Head of caudate nucleus (tissue), 42 donors: ENCODE measurements at regions of chr5 and their contacts with region 1.

Region 1: DNA sequence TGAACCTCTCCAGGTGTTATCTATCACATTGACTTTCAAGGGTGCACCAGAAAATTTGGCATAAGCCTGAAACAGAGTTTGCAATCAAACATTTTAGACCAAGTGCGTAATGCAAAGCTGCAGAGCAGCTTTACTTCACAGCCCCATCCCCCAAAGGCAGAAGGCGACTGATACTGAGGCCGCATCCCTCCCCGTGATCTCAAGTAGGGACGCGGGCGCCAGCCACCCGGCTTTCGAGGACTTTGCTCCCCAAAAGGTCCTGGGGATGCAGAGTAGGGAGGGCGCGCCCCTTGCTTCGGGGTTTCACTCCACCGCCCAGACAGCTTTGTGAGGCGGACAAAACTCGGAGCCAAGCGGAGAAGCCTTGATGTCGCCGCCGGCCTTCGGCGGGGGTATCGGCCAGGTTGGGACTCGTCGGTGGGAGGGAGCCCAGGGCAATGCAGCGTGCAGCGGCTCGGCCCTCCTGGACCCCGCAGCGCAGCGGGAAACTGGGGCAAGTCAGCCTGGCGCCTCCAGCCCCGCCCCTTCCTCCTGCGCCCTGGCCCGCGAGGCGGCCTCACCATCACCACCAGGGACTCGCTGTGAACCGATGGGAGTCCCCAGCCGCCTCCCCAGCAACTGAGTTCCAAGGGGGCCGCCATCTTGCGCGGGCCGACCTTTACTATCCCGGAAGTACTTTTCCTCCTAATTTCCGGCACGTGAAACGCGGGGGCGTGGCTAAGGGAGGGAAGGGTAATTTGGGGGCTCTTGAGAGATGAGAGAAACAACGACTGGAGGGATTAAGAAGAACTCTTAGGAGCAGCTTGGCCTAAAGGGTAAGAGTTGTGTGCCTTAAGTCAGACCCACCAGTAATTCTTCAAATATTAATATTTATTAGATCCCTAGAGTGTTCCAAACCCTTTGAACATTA is at the start of gene MTX3:
- DNase-seq: peak; percentile 82 to 96 (median 90)

Region 2: DNA sequence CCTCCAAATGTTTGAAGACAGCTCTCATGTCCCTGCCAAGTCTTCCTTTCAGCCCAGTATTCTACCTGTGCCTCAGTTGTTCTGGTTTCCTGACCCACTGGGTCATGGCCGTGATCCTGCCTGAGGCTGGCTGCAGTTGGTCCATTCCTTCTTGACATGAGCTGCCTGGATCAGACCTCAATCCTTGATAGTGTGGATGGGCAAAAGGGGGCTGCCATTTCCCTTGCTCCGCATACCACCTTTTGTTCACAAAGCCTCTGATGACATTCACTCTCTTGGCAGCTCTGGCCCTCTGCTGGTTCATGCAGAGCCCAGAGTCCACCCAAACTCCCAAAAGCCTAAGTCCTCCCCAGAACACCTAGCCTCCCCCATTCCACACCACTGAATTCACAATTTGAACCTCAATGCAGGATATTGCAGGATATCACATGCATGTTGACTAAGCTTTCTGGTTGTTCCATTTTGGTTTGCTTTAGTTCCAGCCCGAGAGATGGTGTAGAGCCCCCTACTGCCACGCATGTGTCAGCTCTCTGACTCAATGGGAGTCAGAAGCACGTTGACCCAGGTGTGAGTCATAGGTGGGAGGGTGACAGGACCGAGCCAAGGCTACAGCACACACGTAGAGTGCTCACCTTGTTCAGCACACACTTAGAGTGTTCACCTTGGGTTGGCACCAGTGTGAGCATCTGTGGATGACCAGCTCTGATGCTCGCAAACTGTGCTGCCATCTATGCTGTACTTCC is 137.0 kb before region 1 on chr5:
- intact Hi-C with region 1: no loop called
- DNase-seq: no peak

Region 3: GRCh38 chr5:79901631-79902030 is 89.2 kb before region 1 on chr5:
- intact Hi-C with region 1: no loop called
- DNase-seq: no peak

Region 4: GRCh38 chr5:80069918-80070318 is 79.1 kb after region 1 on chr5:
- intact Hi-C with region 1: loop called (anchors 10 kb)
- DNase-seq: peak in 10 of 42 donors; percentile 12 to 76 (median 39)